ENCODE measurements at regions of chr2 and their contacts with region 1.

Region 1: GRCh38 chr2:219119422-219120043 is 41.1 kb downstream of the NHEJ1 start:
- DNase-seq: no peak
- H3K4me3 ChIP-seq: no peak overlapping the region
- H3K27ac ChIP-seq: no peak overlapping the region
- H3K27me3 ChIP-seq: no peaks in the 10 kb centered on the region
- CTCF ChIP-seq: peak; percentile 78

Region 2: DNA sequence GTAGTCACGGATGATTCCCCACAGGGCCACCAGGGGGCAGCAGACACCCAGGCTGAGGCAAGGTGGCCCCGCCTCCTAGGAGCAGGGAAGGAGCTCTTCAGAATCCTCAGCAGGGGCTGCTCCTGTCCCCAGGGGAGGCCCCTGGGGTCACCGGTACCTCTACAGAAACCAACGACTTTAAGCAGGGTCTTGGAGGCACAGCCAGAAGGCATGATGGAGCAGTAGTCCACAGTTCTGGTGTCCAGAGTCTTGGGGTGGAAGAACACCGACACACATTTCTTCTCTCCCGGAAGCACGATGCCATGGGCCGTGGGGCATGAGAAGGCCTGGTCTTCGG is 89.7 kb before region 1 on chr2:
- CTCF ChIA-PET with region 1: interaction called, 74 read pairs
- POLR2A ChIA-PET with region 1: no interaction called
- DNase-seq: peak; percentile 33
- H3K4me3 ChIP-seq: no peak overlapping the region
- H3K27ac ChIP-seq: no peak overlapping the region
- H3K27me3 ChIP-seq: peaks cover 41% of the 10 kb centered on the region
- CTCF ChIP-seq: peak; percentile 95

Region 3: DNA sequence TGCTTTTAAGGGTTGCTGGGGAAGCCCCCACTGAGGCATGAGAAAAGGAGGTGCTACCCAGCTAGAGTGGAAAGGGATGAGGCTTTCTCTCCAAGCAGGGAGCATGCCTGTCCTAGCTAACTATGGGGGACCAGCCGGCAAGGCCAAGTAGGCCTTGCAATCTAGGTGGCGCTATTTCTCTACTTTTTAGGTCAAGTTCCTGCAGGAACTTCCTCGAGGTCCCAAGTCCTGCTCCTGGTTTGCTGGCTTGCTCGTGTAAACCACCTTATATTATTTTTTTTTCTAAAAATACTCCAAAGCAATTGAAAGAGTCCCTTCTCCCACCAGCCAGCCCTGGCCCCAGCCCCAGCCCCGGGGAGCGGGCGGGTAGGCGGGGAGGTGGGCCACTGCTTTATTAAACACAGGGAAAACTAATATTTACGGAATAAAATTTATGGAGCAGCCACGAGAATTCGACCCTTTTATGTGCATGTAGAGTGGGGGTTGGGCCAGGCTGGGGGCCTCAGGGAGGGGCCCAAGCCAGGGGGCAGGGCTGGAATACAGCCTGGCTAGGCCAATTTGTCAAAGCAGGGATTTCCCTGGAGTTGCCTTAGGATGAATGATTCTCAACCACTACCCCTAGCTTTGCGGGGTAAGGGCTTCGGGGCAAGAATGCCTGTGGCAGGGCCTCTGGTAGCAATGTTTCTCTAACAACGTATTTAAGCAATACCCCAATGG is 46.0 kb before region 1 on chr2:
- CTCF ChIA-PET with region 1: interaction called, 122 read pairs
- POLR2A ChIA-PET with region 1: no interaction called
- DNase-seq: peak; percentile 27
- H3K4me3 ChIP-seq: no peak overlapping the region
- H3K27ac ChIP-seq: no peak overlapping the region
- H3K27me3 ChIP-seq: no peaks in the 10 kb centered on the region
- CTCF ChIP-seq: peak; percentile 63

Region 4: GRCh38 chr2:219095406-219095935 is 24.1 kb before region 1 on chr2:
- CTCF ChIA-PET with region 1: interaction called, 12 read pairs
- POLR2A ChIA-PET with region 1: no interaction called
- DNase-seq: no peak
- H3K4me3 ChIP-seq: no peak overlapping the region
- H3K27ac ChIP-seq: no peak overlapping the region
- H3K27me3 ChIP-seq: no peaks in the 10 kb centered on the region
- CTCF ChIP-seq: no peak

Region 5: DNA sequence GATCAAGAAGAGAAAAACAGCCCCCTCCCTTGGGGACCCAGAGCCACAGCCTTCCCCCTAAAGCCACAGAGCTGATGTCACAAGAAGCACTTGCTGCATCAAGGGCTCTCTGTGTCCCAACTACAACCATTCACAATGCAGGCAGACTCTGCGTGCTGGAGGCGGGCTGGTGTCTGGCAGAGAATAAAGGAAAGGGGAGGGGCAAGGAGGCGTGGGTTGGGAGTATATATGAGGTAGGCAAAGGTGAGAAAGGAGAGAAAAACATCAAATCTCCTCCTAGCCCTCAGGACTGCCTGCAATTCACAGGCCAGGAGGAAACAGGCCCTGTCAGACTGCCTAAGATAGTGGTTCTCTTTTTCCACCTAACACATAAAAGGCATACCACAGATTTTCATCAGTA is 10.1 kb before region 1 on chr2:
- CTCF ChIA-PET with region 1: interaction called, 14 read pairs
- POLR2A ChIA-PET with region 1: no interaction called
- DNase-seq: no peak
- H3K4me3 ChIP-seq: no peak overlapping the region
- H3K27ac ChIP-seq: no peak overlapping the region
- H3K27me3 ChIP-seq: no peaks in the 10 kb centered on the region
- CTCF ChIP-seq: no peak

Region 6: DNA sequence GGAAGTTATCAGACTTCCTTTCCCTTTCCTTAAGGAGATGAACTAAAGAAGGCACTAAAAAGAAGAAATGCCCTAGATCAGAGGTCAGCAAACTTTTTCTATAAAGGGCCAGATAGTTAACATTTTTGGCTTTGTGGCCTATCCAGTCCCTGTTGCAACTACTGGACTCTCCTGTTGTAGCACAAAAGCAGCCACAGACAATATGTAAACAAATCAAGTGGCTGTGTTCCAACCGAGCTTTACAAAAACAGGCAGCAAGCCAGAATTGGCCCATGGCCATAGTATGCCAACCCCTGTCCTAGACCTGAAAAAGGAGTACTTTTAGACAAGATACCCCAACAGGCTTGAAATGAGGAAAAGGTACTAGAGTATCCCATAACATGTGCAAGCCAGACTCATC is 30.1 kb after region 1 on chr2:
- CTCF ChIA-PET with region 1: interaction called, 31 read pairs
- POLR2A ChIA-PET with region 1: interaction called, 4 read pairs
- DNase-seq: no peak
- H3K4me3 ChIP-seq: no peak overlapping the region
- H3K27ac ChIP-seq: no peak overlapping the region
- H3K27me3 ChIP-seq: no peaks in the 10 kb centered on the region
- CTCF ChIP-seq: no peak

Region 7: DNA sequence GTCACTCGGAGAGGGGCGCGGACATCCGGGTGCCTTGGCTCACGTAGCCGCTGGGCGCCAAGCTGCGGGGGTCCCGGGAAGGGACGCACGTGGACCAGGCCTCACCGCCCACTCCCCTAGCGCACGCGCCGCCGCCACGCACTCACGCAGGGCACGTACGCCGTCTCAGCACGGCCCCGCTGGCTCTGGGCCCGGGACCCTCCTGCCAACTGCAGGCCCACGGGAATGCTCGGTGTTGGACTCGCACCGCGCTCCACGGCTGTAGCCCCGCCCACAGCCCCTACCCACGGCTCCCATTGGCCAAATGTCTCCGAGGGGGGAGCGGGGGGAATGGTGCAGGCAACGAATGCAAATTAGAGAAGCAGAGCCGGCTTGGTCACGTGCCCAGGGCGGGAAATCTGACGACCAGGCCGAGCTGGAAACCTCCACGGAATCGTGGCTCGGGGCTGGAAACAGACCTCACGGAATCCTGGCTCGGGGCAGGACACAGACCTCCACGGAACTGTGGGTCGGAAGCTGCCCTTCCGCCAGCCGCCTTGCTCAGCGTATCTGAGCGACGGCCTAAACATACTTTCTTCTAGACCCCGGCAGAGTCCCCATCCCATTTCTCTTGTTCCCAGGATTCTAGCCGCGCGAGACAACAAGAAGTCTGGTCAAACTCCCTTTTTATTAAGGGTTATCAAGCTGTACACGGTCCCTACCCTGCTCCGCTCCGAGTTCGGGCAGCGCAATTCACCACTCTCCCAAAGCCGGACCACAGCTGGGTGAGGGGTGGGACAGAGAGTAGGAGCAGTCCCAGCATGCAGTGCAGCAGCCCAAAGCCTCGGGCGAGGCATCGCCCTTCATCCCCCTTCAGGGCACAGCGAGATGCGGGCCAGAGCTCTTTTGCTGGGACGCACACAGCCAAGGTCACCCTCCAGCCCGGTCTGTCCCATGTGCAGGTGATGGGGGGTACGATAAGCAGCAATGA is 99.5 kb after region 1 on chr2 and contains the start of gene ABCB6:
- CTCF ChIA-PET with region 1: no interaction called
- POLR2A ChIA-PET with region 1: no interaction called
- DNase-seq: peak; percentile 84
- H3K4me3 ChIP-seq: peak within 1 kb of the TSS; percentile 69
- H3K27ac ChIP-seq: peak within 1 kb of the TSS; percentile 96
- H3K27me3 ChIP-seq: no peaks in the 10 kb centered on the region
- CTCF ChIP-seq: no peak
- polyA plus RNA-seq, gene ABCB6: 20.9 and 22.2 TPM in 2 replicates

Measured in AG04450 (cell line).